Breast epithelium (tissue), 4 donors: ENCODE measurements at regions of chr2 and their contacts with region 1.

Region 1: DNA sequence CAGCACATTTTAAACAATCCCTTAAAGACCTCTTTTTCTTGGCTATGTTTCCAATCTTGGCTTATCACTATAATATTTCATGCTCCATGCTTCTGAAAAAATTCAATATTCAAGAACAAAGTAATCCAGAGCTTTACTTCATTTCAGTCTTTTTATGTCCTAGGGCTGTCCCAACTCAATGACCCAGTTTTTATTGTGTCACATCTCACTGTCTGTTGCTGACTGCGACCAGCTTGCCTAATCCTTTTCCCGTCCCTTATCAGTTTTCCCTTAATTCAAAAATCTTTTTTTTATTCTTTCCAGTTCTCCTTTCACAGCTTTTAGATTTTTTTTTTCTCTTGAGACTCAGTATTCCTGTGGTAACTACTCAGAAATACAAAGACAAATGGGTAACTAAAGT is 10.2 kb downstream of the TMEM17 start:
- DNase-seq: no peak
- H3K4me3 ChIP-seq: no peak overlapping the region
- H3K27ac ChIP-seq: no peak overlapping the region
- H3K4me1 ChIP-seq: no peaks in the 10 kb centered on the region
- H3K27me3 ChIP-seq: no peaks in the 10 kb centered on the region
- CTCF ChIP-seq: no peak
- POLR2A ChIP-seq: no peak

Region 2: GRCh38 chr2:62511636-62512035 is 15.9 kb after region 1 on chr2:
- intact Hi-C with region 1: loop called (anchors 2 kb)
- DNase-seq: no peak
- H3K4me3 ChIP-seq: no peak overlapping the region
- H3K27ac ChIP-seq: no peak overlapping the region
- H3K4me1 ChIP-seq: no peaks in the 10 kb centered on the region
- H3K27me3 ChIP-seq: no peaks in the 10 kb centered on the region
- CTCF ChIP-seq: no peak
- POLR2A ChIP-seq: no peak